ENCODE measurements at regions of chr18 and their contacts with region 1.

Region 1: DNA sequence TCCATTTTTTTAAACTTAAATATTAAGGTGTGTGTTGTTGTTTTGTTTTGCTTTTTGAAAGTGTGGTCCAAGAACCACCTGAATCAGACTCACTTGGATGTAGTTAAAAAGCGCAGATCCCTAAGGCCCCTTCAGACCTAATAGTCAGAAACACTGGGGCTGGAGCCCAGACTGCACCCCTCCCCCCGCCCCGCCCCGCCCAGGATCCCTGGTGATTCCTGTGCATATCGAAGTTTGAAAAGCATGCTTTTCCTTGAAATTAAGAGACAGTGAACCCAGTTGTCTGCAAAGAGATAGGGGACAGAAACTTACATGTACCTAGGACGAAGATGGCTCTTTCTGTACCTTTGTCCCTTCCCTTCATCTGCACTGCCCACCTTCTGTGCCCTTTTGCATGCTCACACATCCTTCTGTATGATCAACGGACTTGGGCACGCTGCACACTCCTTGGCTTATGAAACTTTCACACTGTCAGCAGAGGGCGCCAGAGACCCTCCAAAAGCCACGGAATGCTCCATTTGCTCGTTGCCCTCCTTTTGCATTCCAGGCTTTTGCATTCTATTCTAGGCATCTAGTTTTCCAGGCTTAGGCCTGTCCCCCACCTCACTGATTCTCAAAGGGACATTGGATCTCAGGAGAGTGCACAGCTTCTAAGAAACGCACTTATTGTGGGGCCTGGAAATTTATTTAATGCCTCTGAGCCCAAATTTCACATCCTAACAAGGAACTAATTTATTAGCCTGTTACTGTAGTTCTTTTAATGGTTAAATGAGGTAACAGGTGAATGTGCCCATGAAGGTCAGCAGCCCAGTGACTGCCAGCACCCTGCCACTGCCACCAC is 32.8 kb upstream of the SLC14A1 start:
- DNase-seq: peak; percentile 76 to 88
- H3K4me3 ChIP-seq: no peak overlapping the region
- H3K27ac ChIP-seq: no peak overlapping the region
- H3K4me1 ChIP-seq: no peaks in the 10 kb centered on the region
- H3K27me3 ChIP-seq: no peaks in the 10 kb centered on the region
- CTCF ChIP-seq: peak; percentile 80 to 86

Region 2: DNA sequence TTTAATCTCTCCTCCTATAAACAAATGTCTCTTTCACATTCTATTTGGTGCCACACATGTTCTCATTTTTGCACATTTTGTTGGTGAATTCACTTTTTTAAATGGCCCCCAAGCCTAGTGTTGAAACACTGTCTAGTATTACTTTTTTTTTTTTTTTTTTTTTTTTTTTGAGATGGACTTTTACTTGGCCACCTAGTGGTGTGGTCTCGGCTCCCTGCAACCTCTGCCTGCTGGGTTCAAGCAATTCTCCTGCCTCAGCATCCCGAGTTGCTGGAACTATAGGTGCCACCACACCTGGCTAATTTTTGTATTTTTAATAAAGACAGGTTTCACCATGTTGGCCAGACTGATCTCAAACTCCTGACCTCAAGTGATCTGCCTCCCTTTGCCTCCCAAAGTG is 349.7 kb before region 1 on chr18:
- intact Hi-C with region 1: no loop called
- DNase-seq: no peak
- H3K4me3 ChIP-seq: no peak overlapping the region
- H3K27ac ChIP-seq: no peak overlapping the region
- H3K4me1 ChIP-seq: no peaks in the 10 kb centered on the region
- H3K27me3 ChIP-seq: no peaks in the 10 kb centered on the region
- CTCF ChIP-seq: no peak

Region 3: GRCh38 chr18:45456090-45457021 is 234.8 kb before region 1 on chr18:
- intact Hi-C with region 1: no loop called
- DNase-seq: peak in 1 of 2 donors; percentile 51
- H3K4me3 ChIP-seq: no peak overlapping the region
- H3K27ac ChIP-seq: no peak overlapping the region
- H3K4me1 ChIP-seq: no peaks in the 10 kb centered on the region
- H3K27me3 ChIP-seq: no peaks in the 10 kb centered on the region
- CTCF ChIP-seq: no peak

Region 4: DNA sequence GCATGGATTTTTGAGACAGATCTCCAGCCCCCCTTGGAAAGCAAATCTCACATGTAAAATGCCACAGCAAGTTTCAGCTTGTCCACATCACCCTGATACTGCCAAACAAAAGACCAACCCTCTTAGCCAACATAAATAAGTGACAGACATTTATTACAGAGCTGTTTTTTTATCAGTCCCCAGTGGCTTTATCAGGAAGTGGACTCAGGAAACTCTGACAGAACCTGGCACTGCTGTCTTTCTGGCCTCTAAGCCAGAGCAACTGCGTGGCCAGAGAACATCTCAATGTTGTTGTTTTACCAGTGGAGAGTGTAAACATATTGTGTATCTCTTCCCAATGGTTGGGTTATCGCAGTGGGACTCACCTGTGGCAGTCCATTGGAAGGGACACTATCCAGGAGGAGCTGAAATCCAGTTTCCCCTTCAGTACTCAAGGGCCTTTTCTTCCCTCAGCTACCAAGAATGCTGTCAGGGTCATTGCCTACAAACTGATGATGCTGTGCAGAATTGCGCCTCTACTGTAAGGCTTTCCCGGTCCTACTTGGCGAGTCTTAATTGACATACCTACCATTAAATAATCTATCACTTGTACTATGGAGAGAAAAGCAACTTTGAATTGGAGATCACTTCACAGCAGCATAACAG is 54.7 kb after region 1 on chr18:
- intact Hi-C with region 1: no loop called
- DNase-seq: no peak
- H3K4me3 ChIP-seq: no peak overlapping the region
- H3K27ac ChIP-seq: peak overlapping the region; percentile 37 to 41
- H3K4me1 ChIP-seq: peaks cover 0 to 24% (median 14%) of the 10 kb centered on the region in 4 donors
- H3K27me3 ChIP-seq: no peaks in the 10 kb centered on the region
- CTCF ChIP-seq: peak in 1 of 2 experiments; percentile 19

Region 5: DNA sequence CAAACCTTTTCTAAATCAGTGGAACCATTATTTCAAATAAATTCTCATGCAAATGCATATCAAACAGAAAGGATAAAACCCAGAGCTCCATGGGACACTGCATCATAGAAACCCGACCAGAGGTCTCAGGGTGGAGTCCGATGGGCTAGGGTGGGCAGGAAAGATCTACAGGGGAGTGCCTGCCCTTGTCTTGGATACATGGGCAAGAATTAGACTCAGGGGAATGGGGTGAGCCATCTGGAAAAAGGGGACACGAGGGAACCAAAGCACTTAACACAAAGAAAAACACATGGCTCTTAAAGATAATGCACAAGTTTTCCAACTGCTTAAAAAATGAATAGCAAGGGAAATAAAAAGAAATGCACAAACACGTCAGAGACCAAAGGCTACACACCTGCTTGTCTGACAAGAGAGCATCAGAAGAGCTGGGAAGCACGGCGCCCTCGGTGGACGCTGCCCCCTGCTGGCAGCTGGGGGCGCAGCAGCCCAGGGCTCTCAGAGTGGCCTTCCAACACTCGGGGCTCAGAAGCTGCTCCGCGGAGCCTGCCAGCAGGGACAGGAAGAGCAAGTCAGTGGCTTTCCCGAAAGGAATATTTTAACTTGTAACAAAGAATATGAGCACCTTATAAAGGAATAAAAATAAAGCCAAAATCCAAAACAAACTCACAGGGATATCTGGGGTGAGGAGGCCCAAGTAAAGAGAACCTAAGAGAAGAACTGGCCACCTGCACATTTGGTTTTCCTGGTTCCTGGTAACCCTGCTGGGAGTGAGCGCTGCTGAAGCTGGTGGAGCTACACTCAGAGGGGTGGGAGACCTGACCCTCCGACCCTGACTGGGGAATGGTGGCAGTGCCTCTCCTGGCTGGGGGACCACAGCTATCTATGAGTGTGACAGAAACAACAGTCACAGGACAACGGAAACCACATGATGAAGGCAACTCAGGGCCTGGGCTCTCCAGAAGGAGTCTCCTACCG is 188.8 kb after region 1 on chr18:
- intact Hi-C with region 1: loop called (anchors 5 kb)
- DNase-seq: peak; percentile 51 to 77
- H3K4me3 ChIP-seq: no peak overlapping the region
- H3K27ac ChIP-seq: no peak overlapping the region
- H3K4me1 ChIP-seq: no peaks in the 10 kb centered on the region
- H3K27me3 ChIP-seq: no peaks in the 10 kb centered on the region
- CTCF ChIP-seq: peak; percentile 95 to 100

Region 6: DNA sequence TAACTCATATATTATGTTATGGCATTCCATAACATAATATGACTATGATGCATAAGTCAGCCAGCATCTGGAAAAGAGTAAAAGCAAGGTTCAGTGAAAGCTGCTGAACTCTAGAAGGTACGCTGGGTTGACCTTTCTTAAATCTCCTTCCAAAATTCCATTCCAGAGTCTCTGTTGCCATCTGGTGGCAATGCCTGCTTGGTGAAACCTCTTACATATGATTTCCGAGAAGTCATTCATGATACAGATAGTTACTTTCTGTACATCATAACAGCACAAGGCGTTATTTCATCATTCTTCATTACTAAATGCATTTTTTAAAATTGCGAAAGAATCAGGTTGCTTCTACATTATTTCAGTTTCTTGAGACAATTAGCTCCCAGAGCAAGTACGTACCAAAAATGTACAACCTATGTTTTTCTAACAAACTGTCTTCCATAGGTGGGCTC is 282.9 kb after region 1 on chr18:
- intact Hi-C with region 1: loop called (anchors 10 kb)
- DNase-seq: peak in 1 of 2 donors; percentile 63
- H3K4me3 ChIP-seq: no peak overlapping the region
- H3K27ac ChIP-seq: no peak overlapping the region
- H3K4me1 ChIP-seq: no peaks in the 10 kb centered on the region
- H3K27me3 ChIP-seq: no peaks in the 10 kb centered on the region
- CTCF ChIP-seq: peak; percentile 69 to 71